Posterior vena cava (tissue), 2 donors: ENCODE measurements at regions of chr5 and their contacts with region 1.

Region 1: GRCh38 chr5:39775458-39776365 is 350.9 kb upstream of the DAB2 start:
- DNase-seq: no peak

Region 2: GRCh38 chr5:40046792-40047191 is 271.1 kb after region 1 on chr5:
- intact Hi-C with region 1: loop called in 1 of 2 experiments (anchors 10 kb)
- DNase-seq: no peak